ENCODE measurements at regions of chr7 and their contacts with region 1.

Region 1: GRCh38 chr7:151080522-151081169 is at the start of gene FASTK:
- DNase-seq: peak; percentile 77 to 86 (median 83)
- H3K4me3 ChIP-seq: peak within 1 kb of the TSS; percentile 88 to 92 (median 89)
- H3K4me3 Mint-ChIP-seq: peak within 1 kb of the TSS; percentile 83 to 89
- H3K27ac ChIP-seq: peak within 1 kb of the TSS; percentile 52 to 83
- H3K27ac Mint-ChIP-seq: peak within 1 kb of the TSS; percentile 73 to 92 (median 84)
- H3K4me1 ChIP-seq: peaks cover 41 to 56% of the 10 kb centered on the region in 2 donors
- H3K4me1 Mint-ChIP-seq: peaks cover 40% of the 10 kb centered on the region
- H3K27me3 ChIP-seq: no peaks in the 10 kb centered on the region
- H3K27me3 Mint-ChIP-seq: peaks cover 0 to 1% (median 1%) of the 10 kb centered on the region in 3 donors
- CTCF ChIP-seq: no peak
- polyA plus RNA-seq, gene FASTK: 34.7 to 110 (median 38.6) TPM

Region 2: GRCh38 chr7:150378853-150379440 is 701.7 kb before region 1 on chr7 and contains the start of gene ZNF775:
- intact Hi-C with region 1: loop called in 1 of 2 experiments (anchors 10 kb)
- DNase-seq: peak; percentile 90 to 97 (median 91)
- H3K4me3 ChIP-seq: peak within 1 kb of the TSS; percentile 83 to 96 (median 84)
- H3K4me3 Mint-ChIP-seq: peak within 1 kb of the TSS; percentile 90 to 93
- H3K27ac ChIP-seq: peak within 1 kb of the TSS; percentile 70 to 77
- H3K27ac Mint-ChIP-seq: peak within 1 kb of the TSS; percentile 71 to 85 (median 79)
- H3K4me1 ChIP-seq: peaks cover 34 to 39% of the 10 kb centered on the region in 2 donors
- H3K4me1 Mint-ChIP-seq: peaks cover 45% of the 10 kb centered on the region
- H3K27me3 ChIP-seq: no peaks in the 10 kb centered on the region
- H3K27me3 Mint-ChIP-seq: peaks cover 0 to 1% (median 0%) of the 10 kb centered on the region in 3 donors
- CTCF ChIP-seq: no peak
- polyA plus RNA-seq, gene ZNF775: 1.3 to 2.7 (median 1.4) TPM

Region 3: DNA sequence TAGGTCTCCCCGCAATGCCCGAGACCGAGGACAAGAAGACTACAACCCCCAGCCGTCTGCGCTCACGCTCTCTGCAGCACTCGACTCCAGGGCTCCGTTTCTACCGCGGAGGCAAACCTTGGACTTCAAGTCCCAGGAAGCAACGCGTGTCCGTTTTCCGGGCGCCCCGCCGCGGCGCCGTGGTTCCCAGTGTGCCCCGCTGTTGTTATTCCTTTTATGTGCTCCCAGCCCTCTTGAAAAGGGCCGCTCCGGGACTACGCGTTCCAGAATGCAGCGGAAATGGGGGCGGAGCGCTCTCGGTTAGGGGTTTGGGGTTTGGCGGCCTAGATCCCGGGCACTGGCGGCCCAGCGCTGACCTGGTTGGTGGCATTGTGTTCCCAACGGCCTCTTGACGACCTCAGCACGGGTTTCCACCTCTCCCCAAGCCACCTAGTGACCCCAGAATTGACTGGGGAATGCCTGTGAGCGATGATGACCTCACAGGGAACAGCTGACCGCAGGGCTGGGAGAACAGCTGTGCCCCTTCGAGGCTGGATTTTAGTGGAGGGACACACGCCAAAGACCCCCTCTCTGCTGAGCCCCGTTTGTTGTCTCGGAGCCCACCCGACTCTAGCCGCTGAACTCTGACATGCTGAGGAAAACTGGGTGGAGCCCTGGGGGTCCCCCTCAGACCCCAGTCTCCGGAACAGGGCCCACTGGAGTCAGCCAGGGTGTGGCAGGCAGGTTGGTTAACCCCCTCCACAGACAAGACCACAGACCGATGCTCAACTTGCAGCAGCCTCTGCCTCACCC is 22.5 kb before region 1 on chr7:
- intact Hi-C with region 1: loop called in 1 of 2 experiments (anchors 2 kb)
- DNase-seq: peak; percentile 97 to 99 (median 98)
- H3K4me3 ChIP-seq: peak overlapping the region; percentile 66 to 97 (median 94)
- H3K4me3 Mint-ChIP-seq: peak overlapping the region; percentile 93 to 98
- H3K27ac ChIP-seq: peak overlapping the region; percentile 82 to 89
- H3K27ac Mint-ChIP-seq: peak overlapping the region; percentile 82 to 93 (median 89)
- H3K4me1 ChIP-seq: peaks cover 41 to 50% of the 10 kb centered on the region in 2 donors
- H3K4me1 Mint-ChIP-seq: peaks cover 41% of the 10 kb centered on the region
- H3K27me3 ChIP-seq: no peaks in the 10 kb centered on the region
- H3K27me3 Mint-ChIP-seq: peaks cover 0 to 2% (median 1%) of the 10 kb centered on the region in 3 donors
- CTCF ChIP-seq: no peak

Region 4: GRCh38 chr7:151091431-151091830 is 10.8 kb after region 1 on chr7:
- intact Hi-C with region 1: loop called in 1 of 2 experiments (anchors 2 kb)
- DNase-seq: peak; percentile 53 to 73 (median 64)
- H3K4me3 ChIP-seq: no peak overlapping the region
- H3K4me3 Mint-ChIP-seq: no peak overlapping the region
- H3K27ac ChIP-seq: no peak overlapping the region
- H3K27ac Mint-ChIP-seq: peak overlapping the region in 2 of 7 donors; percentile 25 to 59
- H3K4me1 ChIP-seq: peaks cover 37 to 49% of the 10 kb centered on the region in 2 donors
- H3K4me1 Mint-ChIP-seq: peaks cover 45% of the 10 kb centered on the region
- H3K27me3 ChIP-seq: no peaks in the 10 kb centered on the region
- H3K27me3 Mint-ChIP-seq: no peaks in the 10 kb centered on the region
- CTCF ChIP-seq: peak; percentile 75

Region 5: DNA sequence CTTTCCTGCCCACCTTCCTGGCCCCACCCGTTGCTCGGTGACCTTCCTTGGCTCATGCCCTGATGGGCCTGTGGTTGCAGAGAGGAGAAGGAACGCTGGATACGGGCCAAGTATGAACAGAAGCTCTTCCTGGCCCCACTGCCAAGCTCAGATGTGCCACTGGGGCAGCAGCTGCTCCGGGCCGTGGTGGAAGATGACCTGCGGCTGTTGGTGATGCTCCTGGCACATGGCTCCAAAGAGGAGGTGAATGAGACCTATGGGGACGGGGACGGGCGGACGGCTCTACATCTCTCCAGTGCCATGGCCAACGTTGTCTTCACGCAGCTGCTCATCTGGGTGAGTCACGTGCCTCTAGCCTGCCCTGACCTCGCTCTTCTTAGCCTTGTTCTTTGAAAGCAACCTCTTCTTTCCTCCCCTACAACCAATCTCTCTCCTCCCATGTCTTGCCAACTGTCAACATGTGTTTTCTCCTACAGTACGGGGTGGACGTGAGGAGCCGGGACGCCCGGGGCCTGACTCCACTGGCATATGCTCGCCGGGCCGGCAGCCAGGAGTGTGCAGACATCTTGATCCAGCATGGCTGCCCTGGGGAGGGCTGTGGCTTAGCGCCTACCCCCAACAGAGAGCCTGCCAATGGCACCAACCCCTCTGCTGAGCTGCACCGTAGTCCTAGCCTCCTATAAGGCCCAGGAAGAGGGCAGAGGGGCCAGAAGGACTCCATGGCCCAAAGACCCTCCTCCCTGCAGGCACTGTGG is 62.8 kb after region 1 on chr7:
- intact Hi-C with region 1: no loop called
- DNase-seq: no peak
- H3K4me3 ChIP-seq: no peak overlapping the region
- H3K4me3 Mint-ChIP-seq: no peak overlapping the region
- H3K27ac ChIP-seq: no peak overlapping the region
- H3K27ac Mint-ChIP-seq: peak overlapping the region in 1 of 7 donors; percentile 66
- H3K4me1 ChIP-seq: no peaks in the 10 kb centered on the region
- H3K4me1 Mint-ChIP-seq: no peaks in the 10 kb centered on the region
- H3K27me3 ChIP-seq: no peaks in the 10 kb centered on the region
- H3K27me3 Mint-ChIP-seq: peaks cover 2 to 9% (median 3%) of the 10 kb centered on the region in 3 donors
- CTCF ChIP-seq: no peak

Measured in CD14-positive monocyte (primary cell).